WTC11 (cell line): ENCODE measurements at regions of chr17 and their contacts with region 1.

Region 1: GRCh38 chr17:45385331-45385997 is 47.2 kb downstream of the ARHGAP27 start:
- DNase-seq: peak; percentile 94
- ATAC-seq: peak; percentile 86
- H3K4me3 Mint-ChIP-seq: no peak overlapping the region
- H3K27ac Mint-ChIP-seq: no peak overlapping the region
- H3K4me1 Mint-ChIP-seq: peaks cover 24% of the 10 kb centered on the region
- H3K27me3 Mint-ChIP-seq: peaks cover 16% of the 10 kb centered on the region
- CTCF ChIP-seq: peak; percentile 98

Region 2: GRCh38 chr17:45247429-45248131 is 137.9 kb before region 1 on chr17:
- CTCF ChIA-PET with region 1: interaction called, 10 read pairs
- POLR2A ChIA-PET with region 1: no interaction called
- DNase-seq: peak; percentile 99
- ATAC-seq: peak; percentile 87
- H3K4me3 Mint-ChIP-seq: peak overlapping the region; percentile 83
- H3K27ac Mint-ChIP-seq: peak overlapping the region; percentile 80
- H3K4me1 Mint-ChIP-seq: peaks cover 21% of the 10 kb centered on the region
- H3K27me3 Mint-ChIP-seq: peaks cover 2% of the 10 kb centered on the region
- CTCF ChIP-seq: no peak

Region 3: DNA sequence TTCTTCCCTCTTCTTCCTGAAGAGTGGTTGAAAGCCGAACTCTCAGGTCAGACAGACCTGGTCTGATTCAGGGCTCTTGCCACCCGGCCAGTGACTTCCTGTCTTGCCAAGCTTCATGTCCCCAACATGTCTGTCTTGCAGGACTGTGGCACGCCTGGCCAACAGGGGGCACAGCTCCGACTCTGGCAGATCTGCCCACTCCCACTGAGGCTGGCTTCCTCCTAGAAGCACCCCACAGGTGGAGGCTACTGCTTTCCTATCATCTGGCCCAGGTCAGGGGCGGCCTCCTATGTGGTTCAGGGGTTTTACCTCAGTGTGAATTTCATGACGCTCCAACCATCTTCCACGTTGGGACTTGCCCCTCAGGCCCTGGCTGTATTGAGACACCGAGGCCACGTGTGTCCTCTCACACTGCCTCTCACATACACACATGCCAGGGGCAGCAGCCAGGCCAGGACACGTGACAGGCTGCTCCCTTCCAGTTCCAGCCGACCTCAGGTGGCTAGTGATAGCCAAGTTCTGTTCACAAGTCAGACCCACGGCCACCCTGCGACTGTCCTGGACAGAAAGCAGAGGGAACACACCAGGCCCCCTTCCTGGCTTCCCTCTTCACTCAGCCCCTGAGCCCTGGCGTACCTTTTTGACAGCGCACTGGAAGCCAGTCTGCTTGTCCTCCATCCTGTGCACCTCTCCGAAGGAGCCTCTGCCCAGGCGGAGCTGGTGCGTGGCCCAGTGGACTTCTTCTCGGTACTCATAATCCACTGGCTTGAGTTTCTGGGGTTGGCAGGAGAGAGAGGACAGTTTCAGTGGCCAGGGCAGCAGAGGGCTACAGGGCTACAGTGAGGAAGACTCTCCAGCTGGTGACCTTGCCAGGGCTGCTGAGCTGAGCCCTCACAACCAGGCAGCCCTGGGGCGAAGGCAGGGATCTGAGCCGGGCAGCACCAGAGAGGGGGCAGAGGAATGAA is 101.0 kb before region 1 on chr17:
- CTCF ChIA-PET with region 1: interaction called, 16 read pairs
- POLR2A ChIA-PET with region 1: no interaction called
- DNase-seq: peak; percentile 51
- ATAC-seq: peak; percentile 69; the same call in 1 of the 2 replicates
- H3K4me3 Mint-ChIP-seq: no peak overlapping the region
- H3K27ac Mint-ChIP-seq: peak overlapping the region; percentile 85
- H3K4me1 Mint-ChIP-seq: no peaks in the 10 kb centered on the region
- H3K27me3 Mint-ChIP-seq: no peaks in the 10 kb centered on the region
- CTCF ChIP-seq: no peak; the same call in 1 of the 2 replicates

Region 4: DNA sequence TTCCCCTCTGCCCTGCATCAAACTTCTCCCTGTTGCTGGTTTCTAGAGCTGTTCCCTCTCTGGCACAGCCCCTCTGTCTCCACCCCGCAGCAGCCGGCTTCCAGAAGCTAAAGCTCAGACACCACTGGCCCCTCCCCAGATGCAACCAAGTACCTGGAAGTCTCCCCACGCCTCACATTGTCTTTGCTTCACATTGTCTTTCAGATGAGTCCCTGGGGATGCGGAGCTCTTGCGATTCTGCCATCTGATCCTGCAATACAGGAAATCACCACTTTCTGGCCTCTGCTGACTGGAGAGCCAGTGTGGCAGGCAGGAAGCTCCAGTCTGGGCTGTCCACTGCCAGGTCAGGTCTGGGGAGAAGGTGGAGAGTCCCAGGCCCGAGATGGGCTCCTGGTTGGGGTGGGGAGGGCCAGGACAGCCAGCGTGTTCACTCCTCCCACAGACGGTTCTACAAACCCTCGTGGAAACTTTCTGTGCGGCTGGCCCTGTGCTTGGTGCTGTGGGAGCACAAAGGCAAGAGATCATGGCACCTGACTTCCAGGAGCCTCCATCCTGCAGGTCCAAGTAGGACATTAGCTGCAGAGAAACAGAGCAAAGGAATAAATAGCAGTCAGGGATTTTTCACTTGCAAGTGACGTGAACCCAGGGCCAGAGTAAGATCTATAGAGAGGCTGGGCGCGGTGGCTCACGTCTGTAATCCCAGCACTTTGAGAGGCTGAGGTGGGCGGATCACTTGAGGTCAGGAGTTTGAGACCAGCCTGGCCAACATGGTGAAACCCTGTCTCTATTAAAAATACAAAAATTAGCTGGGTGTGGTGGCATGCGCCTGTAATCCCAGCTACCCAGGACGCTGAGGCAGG is 20.7 kb before region 1 on chr17:
- CTCF ChIA-PET with region 1: interaction called, 28 read pairs
- POLR2A ChIA-PET with region 1: no interaction called
- DNase-seq: peak; percentile 79
- ATAC-seq: peak; percentile 98
- H3K4me3 Mint-ChIP-seq: peak overlapping the region; percentile 36
- H3K27ac Mint-ChIP-seq: peak overlapping the region; percentile 97
- H3K4me1 Mint-ChIP-seq: peaks cover 39% of the 10 kb centered on the region
- H3K27me3 Mint-ChIP-seq: peaks cover 6% of the 10 kb centered on the region
- CTCF ChIP-seq: no peak

Region 5: GRCh38 chr17:45414990-45415881 is 29.8 kb after region 1 on chr17:
- CTCF ChIA-PET with region 1: no interaction called
- POLR2A ChIA-PET with region 1: no interaction called
- DNase-seq: no peak
- ATAC-seq: no peak
- H3K4me3 Mint-ChIP-seq: no peak overlapping the region
- H3K27ac Mint-ChIP-seq: peak overlapping the region; percentile 21; the same call in 1 of the 2 replicates
- H3K4me1 Mint-ChIP-seq: peaks cover 23% of the 10 kb centered on the region
- H3K27me3 Mint-ChIP-seq: no peaks in the 10 kb centered on the region
- CTCF ChIP-seq: no peak

Region 6: DNA sequence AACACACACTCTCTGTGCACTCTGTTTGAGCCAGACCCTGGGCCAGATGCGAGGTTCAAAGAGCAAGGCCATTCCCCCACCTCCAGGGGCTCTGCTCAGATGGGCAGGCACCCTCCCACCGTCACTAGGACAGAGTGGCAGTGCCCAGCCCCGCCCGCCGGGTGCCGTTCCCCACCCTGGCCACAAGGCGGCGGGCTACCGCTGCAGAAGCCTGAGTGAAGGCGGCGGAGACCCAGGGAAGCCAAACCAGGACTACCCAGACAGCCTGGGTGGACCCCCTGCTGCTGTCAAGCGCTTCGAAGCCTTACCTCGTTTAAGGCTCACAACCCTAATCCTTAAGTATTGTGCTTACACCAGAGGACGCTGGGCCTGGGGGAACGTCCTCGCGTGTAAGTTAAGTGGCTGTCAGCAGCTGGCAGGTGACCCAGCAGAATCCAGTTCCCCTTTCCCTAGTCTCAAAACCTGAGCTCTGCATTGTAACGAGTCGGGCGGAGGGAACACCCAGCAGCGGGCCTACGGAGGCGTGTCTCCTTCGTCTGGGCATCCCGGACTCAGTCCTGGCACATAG is 42.7 kb after region 1 on chr17:
- CTCF ChIA-PET with region 1: interaction called, 16 read pairs
- POLR2A ChIA-PET with region 1: no interaction called
- DNase-seq: peak; percentile 86
- ATAC-seq: peak; percentile 15
- H3K4me3 Mint-ChIP-seq: peak overlapping the region; percentile 67
- H3K27ac Mint-ChIP-seq: no peak overlapping the region
- H3K4me1 Mint-ChIP-seq: peaks cover 36% of the 10 kb centered on the region
- H3K27me3 Mint-ChIP-seq: peaks cover 57% of the 10 kb centered on the region
- CTCF ChIP-seq: peak; percentile 99

Region 7: DNA sequence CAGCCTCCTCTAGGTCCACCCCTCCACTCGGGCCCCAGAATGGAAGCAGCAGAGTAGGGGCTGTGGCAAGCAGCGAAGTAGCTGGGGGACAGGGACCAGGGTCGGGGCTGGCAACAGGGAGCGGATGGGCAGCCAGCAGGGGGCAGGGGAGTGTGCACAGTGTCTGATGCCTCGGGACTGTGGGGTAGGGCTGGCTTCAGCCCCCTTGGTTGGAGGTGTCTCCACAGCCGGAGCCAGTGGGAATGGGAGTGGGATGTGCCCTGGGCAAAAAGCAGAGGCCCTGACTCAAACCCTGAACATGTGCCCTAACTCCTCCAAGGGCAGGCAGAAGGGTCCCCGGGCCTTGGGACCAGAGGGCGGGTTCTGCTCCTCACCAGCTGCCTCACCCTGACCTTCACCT is 65.7 kb after region 1 on chr17:
- CTCF ChIA-PET with region 1: no interaction called
- POLR2A ChIA-PET with region 1: no interaction called
- DNase-seq: peak; percentile 44
- ATAC-seq: peak; percentile 24; the same call in 1 of the 2 replicates
- H3K4me3 Mint-ChIP-seq: no peak overlapping the region
- H3K27ac Mint-ChIP-seq: no peak overlapping the region
- H3K4me1 Mint-ChIP-seq: peaks cover 3% of the 10 kb centered on the region
- H3K27me3 Mint-ChIP-seq: no peaks in the 10 kb centered on the region
- CTCF ChIP-seq: no peak